ENCODE measurements at regions of chr1 and their contacts with region 1.

Region 1: DNA sequence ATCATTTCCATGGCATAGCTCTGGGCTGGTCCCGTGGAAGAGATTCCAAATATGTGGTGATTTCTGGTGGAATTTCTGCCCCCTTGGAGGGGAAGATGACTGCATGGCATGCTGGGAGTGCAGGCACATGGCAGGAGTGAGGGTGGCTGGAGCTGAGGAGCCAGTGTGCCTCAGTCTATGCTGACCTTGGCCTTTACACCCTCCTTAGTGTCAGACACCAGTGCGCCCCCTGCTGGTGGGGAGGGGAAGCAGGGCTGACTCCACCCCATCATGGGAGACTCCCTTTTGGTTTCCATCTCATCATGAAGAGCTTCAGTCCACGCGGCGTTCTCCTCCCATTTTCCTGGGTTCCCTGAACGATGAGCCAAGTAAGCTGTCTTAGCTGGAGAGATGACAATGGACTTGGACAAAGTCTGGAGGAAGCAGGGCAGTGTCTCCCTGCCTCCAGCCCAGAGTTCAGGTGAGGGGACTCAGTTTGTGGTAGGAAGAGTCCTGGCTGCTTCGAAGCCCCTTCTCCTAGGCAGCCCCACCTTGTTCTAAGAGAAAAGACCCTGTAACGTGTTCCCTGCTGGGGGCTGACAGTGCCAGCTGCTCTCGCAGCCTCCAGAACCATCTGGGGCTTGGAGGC is 10.3 kb downstream of the ALX3 start:
- H3K4me3 ChIP-seq: no peak overlapping the region
- H3K27ac ChIP-seq: no peak overlapping the region
- H3K4me1 ChIP-seq: no peaks in the 10 kb centered on the region
- CTCF ChIP-seq: peak; percentile 71

Region 2: GRCh38 chr1:109895720-109896504 is 164.2 kb before region 1 on chr1:
- CTCF ChIA-PET with region 1: no interaction called
- POLR2A ChIA-PET with region 1: no interaction called
- H3K4me3 ChIP-seq: no peak overlapping the region
- H3K27ac ChIP-seq: no peak overlapping the region
- H3K4me1 ChIP-seq: no peaks in the 10 kb centered on the region
- CTCF ChIP-seq: no peak

Region 3: DNA sequence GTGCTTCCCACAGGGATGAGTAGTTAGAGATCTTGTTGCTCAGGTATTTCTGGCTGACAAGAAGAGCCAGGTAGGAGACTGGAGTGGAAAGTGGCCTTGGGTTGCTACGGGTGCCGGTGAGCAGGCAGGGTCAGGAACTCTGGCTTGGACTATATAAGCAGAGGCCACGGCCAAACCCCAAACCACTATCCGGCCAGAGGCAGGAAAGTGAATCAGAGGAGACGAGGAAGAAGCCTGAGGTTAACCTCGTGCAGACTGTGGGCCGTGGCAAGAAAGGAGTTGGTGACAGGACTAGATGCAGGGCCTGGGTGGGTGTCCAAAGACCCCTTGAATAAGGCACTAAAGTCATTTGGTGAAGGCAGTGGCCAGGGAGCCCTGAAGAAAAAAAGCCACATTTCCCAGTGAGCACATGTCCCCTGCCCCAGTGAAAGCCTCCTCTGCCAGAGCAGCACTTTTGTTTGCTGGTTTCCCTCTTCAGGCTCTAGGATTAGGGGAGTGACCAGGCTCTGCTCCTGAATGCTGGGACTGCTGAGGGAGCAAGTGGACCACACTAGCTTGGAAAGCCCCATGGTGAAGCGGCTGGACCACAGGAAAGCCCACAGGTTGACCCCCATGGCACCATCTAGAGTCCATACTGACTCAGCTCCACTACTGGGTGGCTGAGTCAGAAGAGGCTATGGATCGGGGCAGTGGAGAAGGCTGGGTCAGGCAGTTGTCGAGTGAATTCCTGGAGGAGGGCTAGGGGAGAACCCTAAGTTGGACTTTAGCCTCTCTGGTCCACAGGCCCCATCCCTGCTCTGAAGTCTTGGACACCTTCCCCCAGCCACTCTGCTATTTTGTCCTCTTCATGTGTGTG is 126.1 kb before region 1 on chr1:
- CTCF ChIA-PET with region 1: no interaction called
- POLR2A ChIA-PET with region 1: no interaction called
- H3K4me3 ChIP-seq: no peak overlapping the region
- H3K27ac ChIP-seq: no peak overlapping the region
- H3K4me1 ChIP-seq: no peaks in the 10 kb centered on the region
- CTCF ChIP-seq: no peak

Region 4: GRCh38 chr1:110040548-110040947 is 19.6 kb before region 1 on chr1:
- CTCF ChIA-PET with region 1: interaction called, 34 read pairs
- POLR2A ChIA-PET with region 1: no interaction called
- H3K4me3 ChIP-seq: no peak overlapping the region
- H3K27ac ChIP-seq: no peak overlapping the region
- H3K4me1 ChIP-seq: peaks cover 3% of the 10 kb centered on the region; the same call in 1 of the 2 replicates
- CTCF ChIP-seq: no peak

Region 5: GRCh38 chr1:110070282-110070669 is 10.1 kb after region 1 on chr1:
- CTCF ChIA-PET with region 1: interaction called, 15 read pairs
- POLR2A ChIA-PET with region 1: no interaction called
- H3K4me3 ChIP-seq: no peak overlapping the region
- H3K27ac ChIP-seq: no peak overlapping the region
- H3K4me1 ChIP-seq: no peaks in the 10 kb centered on the region
- CTCF ChIP-seq: no peak

Region 6: GRCh38 chr1:110076789-110077500 is 16.8 kb after region 1 on chr1:
- CTCF ChIA-PET with region 1: interaction called, 15 read pairs
- POLR2A ChIA-PET with region 1: no interaction called
- H3K4me3 ChIP-seq: no peak overlapping the region
- H3K27ac ChIP-seq: no peak overlapping the region
- H3K4me1 ChIP-seq: no peaks in the 10 kb centered on the region
- CTCF ChIP-seq: no peak

Region 7: GRCh38 chr1:110106013-110106941 is 46.1 kb after region 1 on chr1:
- CTCF ChIA-PET with region 1: interaction called, 92 read pairs
- POLR2A ChIA-PET with region 1: no interaction called
- H3K4me3 ChIP-seq: no peak overlapping the region
- H3K27ac ChIP-seq: no peak overlapping the region
- H3K4me1 ChIP-seq: no peaks in the 10 kb centered on the region
- CTCF ChIP-seq: peak; percentile 87